HepG2 (cell line): ENCODE measurements at regions of chr6 and their contacts with region 1.

Region 1: DNA sequence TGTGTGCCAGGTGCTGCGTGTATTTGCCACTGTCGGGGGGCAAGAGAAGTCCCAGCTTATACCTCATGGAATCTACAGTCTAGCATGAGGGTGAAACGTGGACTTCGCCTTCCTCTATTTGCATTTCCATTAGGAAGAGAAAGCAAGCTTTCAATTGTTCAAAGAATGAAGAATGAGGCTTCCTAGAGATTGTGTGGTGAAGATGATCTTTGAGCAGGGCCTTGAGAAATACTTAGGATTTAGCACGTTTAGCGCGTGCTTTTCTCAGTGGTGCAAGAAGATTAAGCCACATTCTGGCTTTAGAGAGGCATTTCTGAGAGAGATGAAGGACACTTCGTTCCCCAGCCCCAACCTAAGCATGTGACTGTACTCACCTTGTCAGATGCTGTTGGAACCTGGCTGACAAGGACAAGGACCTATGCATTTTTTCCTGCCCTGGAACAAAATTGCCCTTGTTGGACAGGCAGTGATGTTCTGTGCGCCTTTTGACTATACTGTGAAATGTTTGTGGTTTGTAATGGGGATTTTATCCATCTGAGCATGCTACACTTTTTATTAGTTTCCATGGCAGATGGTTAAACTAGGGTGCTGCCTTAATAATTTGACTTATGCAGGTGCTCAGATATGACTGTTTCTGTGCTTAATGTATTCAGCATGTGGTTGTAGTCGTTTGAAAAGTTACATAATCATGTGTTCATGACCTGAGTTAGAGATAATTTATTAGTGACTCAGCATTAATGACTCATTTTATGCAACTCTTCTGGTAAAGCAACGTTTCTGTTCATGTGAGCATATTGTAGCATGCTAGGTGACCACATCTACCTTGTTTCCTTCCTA is 10.7 kb downstream of the TULP4 start:
- DNase-seq: peak; percentile 97
- ATAC-seq: peak; percentile 92
- H3K4me3 ChIP-seq: peak overlapping the region in 1 of 3 experiments; percentile 43; a peak in 2 of 6 replicates
- H3K27ac ChIP-seq: peak overlapping the region; percentile 91
- H3K4me1 ChIP-seq: peaks cover 70% of the 10 kb centered on the region
- H3K27me3 ChIP-seq: no peaks in the 10 kb centered on the region
- CTCF ChIP-seq: 0 out of 2 replicates have a peak, but pooled peaks have one; percentile 3
- EP300 ChIP-seq: peak; percentile 91 to 96
- POLR2A ChIP-seq: peak in 1 of 2 experiments; percentile 73; a peak in 2 of 4 replicates
- RAD21 ChIP-seq: peak; percentile 35; the same call in 1 of the 2 replicates

Region 2: GRCh38 chr6:158231551-158232315 is 91.2 kb before region 1 on chr6:
- CTCF ChIA-PET with region 1: no interaction called
- POLR2A ChIA-PET with region 1: interaction called, 4 read pairs
- in situ Hi-C with region 1: no loop called
- intact Hi-C with region 1: loop called (anchors 5 kb)
- DNase-seq: peak; percentile 74
- ATAC-seq: peak; percentile 71
- H3K4me3 ChIP-seq: peak overlapping the region; percentile 63 to 87 (median 78)
- H3K27ac ChIP-seq: peak overlapping the region; percentile 81
- H3K4me1 ChIP-seq: peaks cover 49% of the 10 kb centered on the region
- H3K27me3 ChIP-seq: no peaks in the 10 kb centered on the region; a peak in 1 of 5 replicates
- CTCF ChIP-seq: no peak
- EP300 ChIP-seq: no peak
- POLR2A ChIP-seq: peak; percentile 52 to 72
- RAD21 ChIP-seq: no peak

Region 3: GRCh38 chr6:158303210-158303731 is 19.7 kb before region 1 on chr6:
- CTCF ChIA-PET with region 1: no interaction called
- POLR2A ChIA-PET with region 1: interaction called, 10 read pairs
- in situ Hi-C with region 1: no loop called
- intact Hi-C with region 1: no loop called
- DNase-seq: peak; percentile 84
- ATAC-seq: peak; percentile 88
- H3K4me3 ChIP-seq: peak overlapping the region; percentile 17 to 38 (median 21); a peak in 3 of 6 replicates
- H3K27ac ChIP-seq: peak overlapping the region; percentile 77
- H3K4me1 ChIP-seq: peaks cover 79% of the 10 kb centered on the region
- H3K27me3 ChIP-seq: no peaks in the 10 kb centered on the region
- CTCF ChIP-seq: no peak
- EP300 ChIP-seq: peak in 1 of 2 experiments; percentile 76; a peak in 1 of 4 replicates
- POLR2A ChIP-seq: peak; percentile 39 to 40; a peak in 2 of 4 replicates
- RAD21 ChIP-seq: 0 out of 2 replicates have a peak, but pooled peaks have one; percentile 13

Region 4: GRCh38 chr6:158338311-158339112 is 15.6 kb after region 1 on chr6:
- CTCF ChIA-PET with region 1: no interaction called
- POLR2A ChIA-PET with region 1: interaction called, 16 read pairs
- in situ Hi-C with region 1: no loop called
- intact Hi-C with region 1: loop called (anchors 2 kb)
- DNase-seq: peak; percentile 39
- ATAC-seq: peak; percentile 81
- H3K4me3 ChIP-seq: peak overlapping the region in 1 of 3 experiments; percentile 13; a peak in 1 of 6 replicates
- H3K27ac ChIP-seq: peak overlapping the region; percentile 67
- H3K4me1 ChIP-seq: peaks cover 65% of the 10 kb centered on the region
- H3K27me3 ChIP-seq: no peaks in the 10 kb centered on the region
- CTCF ChIP-seq: no peak
- EP300 ChIP-seq: no peak
- POLR2A ChIP-seq: no peak
- RAD21 ChIP-seq: no peak

Region 5: DNA sequence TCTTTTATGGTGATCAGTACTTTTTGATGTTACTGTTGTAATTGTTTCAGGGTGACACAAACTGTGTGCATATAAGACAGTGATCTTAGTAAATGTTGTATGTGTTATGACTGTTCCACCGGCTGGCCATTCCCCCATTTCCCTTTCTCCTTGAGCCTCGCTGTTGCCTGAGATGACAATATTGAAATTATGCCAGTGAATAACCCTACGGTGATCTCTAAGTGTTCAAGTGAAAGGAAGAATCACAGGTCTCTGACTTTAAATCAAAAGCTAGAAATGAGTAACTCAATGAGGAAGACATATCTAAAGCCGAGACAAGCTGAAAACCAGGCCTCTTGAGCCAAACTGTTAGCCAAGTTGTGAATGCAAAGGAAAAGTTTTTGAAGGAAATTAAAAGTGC is 21.6 kb after region 1 on chr6:
- CTCF ChIA-PET with region 1: no interaction called
- POLR2A ChIA-PET with region 1: interaction called, 16 read pairs
- in situ Hi-C with region 1: no loop called
- intact Hi-C with region 1: loop called (anchors 2 kb)
- DNase-seq: no peak
- ATAC-seq: no peak
- H3K4me3 ChIP-seq: no peak overlapping the region
- H3K27ac ChIP-seq: no peak overlapping the region
- H3K4me1 ChIP-seq: peaks cover 61% of the 10 kb centered on the region
- H3K27me3 ChIP-seq: no peaks in the 10 kb centered on the region
- CTCF ChIP-seq: no peak
- EP300 ChIP-seq: no peak
- POLR2A ChIP-seq: no peak
- RAD21 ChIP-seq: no peak

Region 6: DNA sequence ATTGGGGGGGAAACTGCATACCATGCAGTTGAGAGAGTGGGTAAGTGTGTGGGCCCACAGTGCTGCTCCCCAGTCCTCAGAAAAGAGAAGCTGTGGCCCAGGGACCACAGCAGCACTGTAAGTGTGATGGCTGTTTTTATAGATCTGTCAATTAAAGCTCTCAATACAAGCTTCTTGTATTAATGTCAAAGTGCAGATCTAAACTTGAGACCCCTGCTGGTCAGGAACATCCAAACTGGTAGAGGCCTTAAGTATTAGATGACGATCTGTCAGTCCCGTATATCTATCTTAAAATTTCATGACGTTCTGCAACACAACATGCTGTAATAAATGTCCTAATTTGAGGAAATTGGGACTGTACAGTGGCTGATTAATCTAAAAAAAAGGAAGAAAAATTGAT is 64.1 kb after region 1 on chr6:
- CTCF ChIA-PET with region 1: no interaction called
- POLR2A ChIA-PET with region 1: no interaction called
- in situ Hi-C with region 1: no loop called
- intact Hi-C with region 1: loop called (anchors 10 kb)
- DNase-seq: peak; percentile 46
- ATAC-seq: peak; percentile 49; the same call in 2 of the 3 replicates
- H3K4me3 ChIP-seq: no peak overlapping the region
- H3K27ac ChIP-seq: no peak overlapping the region
- H3K4me1 ChIP-seq: peaks cover 11% of the 10 kb centered on the region; the same call in 1 of the 2 replicates
- H3K27me3 ChIP-seq: no peaks in the 10 kb centered on the region
- CTCF ChIP-seq: peak; percentile 31
- EP300 ChIP-seq: no peak
- POLR2A ChIP-seq: no peak
- RAD21 ChIP-seq: no peak